Psoas muscle (tissue), 8 donors: ENCODE measurements at regions of chr14 and their contacts with region 1.

Region 1: GRCh38 chr14:96362965-96363756 is at the starts of genes ATG2B and GSKIP:
- DNase-seq: peak; percentile 95 to 97
- ATAC-seq: peak; percentile 98 to 99 (median 98)
- H3K4me3 ChIP-seq: peak within 1 kb of the TSS; percentile 96
- H3K27ac ChIP-seq: peak within 1 kb of the TSS; percentile 91
- H3K4me1 ChIP-seq: peaks cover 22% of the 10 kb centered on the region
- H3K27me3 ChIP-seq: no peaks in the 10 kb centered on the region
- CTCF ChIP-seq: no peak
- total RNA-seq, gene ATG2B: 12.6 to 21.5 (median 16.8) TPM
- total RNA-seq, gene GSKIP: 5.7 to 7.2 (median 6.6) TPM

Region 2: DNA sequence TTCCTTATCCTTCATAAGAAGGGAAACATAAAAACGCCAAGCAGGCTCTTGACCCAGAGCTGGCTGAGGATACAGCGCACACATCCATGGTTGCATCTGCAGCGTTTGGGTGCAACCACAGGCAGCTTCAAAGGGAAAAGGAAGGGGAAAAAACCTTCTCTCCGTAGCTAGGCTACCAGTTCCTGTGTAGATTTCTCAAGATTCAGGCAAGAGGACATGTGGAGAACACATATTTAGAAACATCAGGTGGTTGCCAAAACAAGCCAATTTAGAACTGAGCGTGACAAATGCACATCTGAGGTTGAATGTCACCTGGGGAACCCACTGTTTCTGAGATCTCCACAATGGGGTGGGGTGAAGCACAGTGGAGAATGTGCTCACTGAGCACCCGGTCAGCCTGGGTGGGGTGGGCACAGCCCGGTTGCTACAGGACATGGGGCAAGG is 236.8 kb before region 1 on chr14:
- intact Hi-C with region 1: no loop called
- DNase-seq: no peak
- ATAC-seq: peak in 1 of 4 donors; percentile 19
- H3K4me3 ChIP-seq: no peak overlapping the region
- H3K27ac ChIP-seq: no peak overlapping the region
- H3K4me1 ChIP-seq: no peaks in the 10 kb centered on the region
- H3K27me3 ChIP-seq: peaks cover 0 to 2% (median 0%) of the 10 kb centered on the region in 3 donors
- CTCF ChIP-seq: no peak

Region 3: DNA sequence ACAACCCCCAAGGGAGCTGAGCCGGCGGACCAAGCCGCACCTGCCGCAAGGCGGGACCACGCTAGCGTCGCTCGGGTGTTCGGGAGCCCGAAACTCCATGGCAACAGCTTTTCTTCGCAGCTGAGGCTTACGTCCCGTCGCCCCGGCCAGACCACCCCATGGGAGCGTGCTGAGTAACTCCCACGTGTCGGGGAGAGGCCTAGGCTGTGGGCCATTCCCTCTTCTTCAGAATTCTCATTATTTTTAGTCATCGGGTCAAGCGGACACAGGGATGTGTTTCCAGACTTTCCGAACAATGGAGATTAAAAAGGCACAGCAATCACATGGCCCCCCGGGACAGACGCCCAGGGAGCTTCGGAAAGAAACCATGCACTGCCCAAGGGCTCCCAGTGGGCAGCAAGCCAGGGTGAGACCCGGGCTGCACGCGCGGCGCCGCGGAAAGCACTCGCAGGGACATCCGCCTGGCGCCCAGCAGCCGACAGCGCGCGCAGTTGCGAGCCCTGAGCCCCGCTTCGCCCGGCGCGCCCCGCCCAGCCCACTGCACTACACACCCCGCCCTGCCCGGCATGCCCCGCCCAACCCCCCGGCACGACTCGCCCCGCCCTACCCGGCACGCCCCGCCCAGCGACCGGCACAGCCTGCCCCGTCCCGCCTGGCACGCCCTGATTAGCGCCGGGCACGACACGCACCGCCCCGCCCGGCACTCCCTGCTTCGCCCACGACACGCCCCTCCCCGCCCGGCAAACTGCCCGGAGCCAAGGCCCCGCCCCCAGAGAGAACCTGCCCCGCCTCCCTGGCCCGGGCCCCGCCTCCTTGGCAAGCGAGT is 28.3 kb after region 1 on chr14:
- intact Hi-C with region 1: loop called (anchors 2 kb)
- DNase-seq: peak; percentile 98 to 99
- ATAC-seq: peak; percentile 98 to 100 (median 99)
- H3K4me3 ChIP-seq: peak overlapping the region; percentile 85
- H3K27ac ChIP-seq: peak overlapping the region; percentile 50
- H3K4me1 ChIP-seq: peaks cover 7% of the 10 kb centered on the region
- H3K27me3 ChIP-seq: no peaks in the 10 kb centered on the region
- CTCF ChIP-seq: no peak

Region 4: DNA sequence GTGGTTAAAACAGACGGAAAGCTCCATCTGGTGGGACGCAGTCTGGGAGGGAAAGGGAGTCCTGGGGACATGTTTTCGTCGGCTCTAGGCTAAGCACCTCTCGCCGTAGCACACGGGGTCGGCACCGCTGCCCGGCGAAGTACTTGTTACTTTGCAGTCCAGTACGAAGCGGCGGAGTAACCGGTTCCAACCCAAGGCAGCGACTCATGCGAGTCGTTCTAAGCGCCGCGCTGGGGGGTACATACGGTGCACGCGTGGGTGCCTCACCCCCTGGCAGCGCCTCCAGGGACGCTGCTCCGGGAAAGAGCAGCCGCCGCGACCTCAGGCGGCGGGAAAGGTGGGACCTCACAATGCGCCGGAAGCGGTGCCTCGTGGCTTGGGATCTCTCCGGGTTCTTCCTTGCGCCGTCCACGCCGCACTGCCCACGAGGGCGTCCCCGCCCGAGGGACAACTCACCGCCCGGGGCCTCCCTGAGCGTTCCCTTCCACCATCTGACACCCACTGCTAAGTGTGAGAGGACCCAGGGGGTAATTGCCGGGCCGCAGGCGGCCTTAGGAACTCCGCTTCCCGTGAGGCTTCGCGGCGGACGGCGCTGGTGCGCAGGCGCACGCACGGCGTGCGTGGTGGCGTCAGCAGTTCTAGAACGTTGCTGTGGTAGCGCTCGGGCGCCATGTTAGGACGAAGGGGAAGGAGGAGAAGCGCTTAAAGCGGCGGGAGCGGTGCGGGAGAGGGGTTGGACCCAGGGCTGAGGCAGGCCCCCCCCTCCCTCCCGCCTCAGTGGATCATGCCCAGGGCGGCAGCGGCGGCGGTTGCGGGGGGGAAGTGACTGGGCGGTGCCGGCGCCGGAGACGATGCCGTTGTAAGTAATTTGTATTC is 138.8 kb after region 1 on chr14 and contains the start of gene PAPOLA:
- intact Hi-C with region 1: loop called in 1 of 2 experiments (anchors 5 kb)
- DNase-seq: peak; percentile 95 to 98
- ATAC-seq: peak; percentile 98
- H3K4me3 ChIP-seq: peak within 1 kb of the TSS; percentile 88
- H3K27ac ChIP-seq: peak within 1 kb of the TSS; percentile 97
- H3K4me1 ChIP-seq: peaks cover 34% of the 10 kb centered on the region
- H3K27me3 ChIP-seq: no peaks in the 10 kb centered on the region
- CTCF ChIP-seq: peak; percentile 17
- total RNA-seq, gene PAPOLA: 88.8 to 103 (median 93.8) TPM

Region 5: DNA sequence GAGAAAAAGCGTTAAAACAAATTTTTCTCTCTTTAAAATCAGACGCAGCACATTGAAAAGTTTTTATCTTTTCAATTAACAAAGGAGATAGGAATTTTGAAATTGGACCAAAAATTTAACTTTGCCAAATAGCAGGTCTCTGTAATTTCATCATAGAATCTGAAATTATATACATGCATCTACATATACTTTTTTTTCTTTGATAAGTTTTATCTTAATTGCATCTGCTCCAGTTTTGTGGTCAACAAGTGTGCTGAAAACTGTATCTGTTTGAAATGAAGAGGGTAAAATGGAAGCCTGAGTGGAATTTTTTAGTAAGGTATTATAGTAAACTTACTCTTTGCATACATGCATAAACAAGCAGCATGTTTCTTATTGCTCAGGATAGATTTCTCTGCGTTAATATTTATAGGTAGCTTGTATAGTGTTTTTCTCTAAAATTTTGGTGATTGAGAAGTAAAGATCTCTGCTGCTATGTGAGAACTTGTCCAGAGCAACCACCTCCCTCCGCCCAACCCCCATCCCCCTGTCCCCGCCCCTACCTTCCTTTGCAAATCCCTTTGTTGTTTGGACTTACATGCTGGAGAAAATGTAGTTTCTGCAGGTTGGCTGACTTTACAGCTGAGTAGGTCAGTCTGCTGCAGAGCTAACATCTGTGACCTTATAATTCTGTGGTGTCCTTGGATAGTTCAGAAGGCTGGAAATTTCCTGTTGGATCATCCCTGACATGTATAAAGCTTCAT is 498.6 kb after region 1 on chr14:
- intact Hi-C with region 1: no loop called
- DNase-seq: no peak
- ATAC-seq: no peak
- H3K4me3 ChIP-seq: no peak overlapping the region
- H3K27ac ChIP-seq: no peak overlapping the region
- H3K4me1 ChIP-seq: no peaks in the 10 kb centered on the region
- H3K27me3 ChIP-seq: no peaks in the 10 kb centered on the region
- CTCF ChIP-seq: no peak